ENCODE measurements at regions of chr14 and their contacts with region 1.

Region 1: DNA sequence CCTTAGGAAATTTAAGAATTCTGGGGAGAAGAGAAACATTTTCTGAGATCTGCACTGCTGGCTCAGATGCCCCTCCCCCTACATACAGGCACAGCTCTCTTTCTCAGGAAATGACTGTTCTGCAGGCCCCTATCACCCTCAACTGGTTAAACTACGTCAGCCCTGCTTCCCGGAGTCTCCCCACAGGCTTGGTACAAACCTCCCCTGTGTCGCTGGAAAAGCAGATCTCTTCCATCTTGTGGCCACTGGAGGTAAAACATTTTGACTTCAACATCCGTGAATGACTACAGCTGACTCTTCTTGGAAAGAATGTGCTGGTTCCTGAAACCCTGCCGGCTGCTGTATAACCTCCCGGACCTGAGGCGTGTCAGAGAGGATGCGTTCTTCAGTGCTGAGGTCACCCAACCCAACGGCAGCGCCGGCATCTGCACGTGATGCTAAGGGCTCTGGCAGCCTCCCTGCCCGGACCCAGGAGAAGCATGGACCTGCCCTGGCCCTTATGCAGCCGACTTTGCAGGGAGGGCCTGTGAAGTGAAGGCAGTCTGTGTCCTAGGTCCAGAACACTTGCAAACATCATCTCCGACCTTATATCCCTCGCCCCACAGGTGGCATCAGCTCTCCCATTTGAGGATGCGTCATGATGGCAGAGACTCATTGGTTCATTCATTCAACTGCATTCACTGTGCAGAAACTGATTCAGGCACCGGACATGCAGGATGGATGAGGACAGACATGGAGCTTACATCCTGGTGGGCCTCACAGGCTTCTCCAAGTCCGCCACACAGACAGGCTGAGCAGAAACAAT is 129.3 kb downstream of the GCH1 start:
- DNase-seq: peak; percentile 84
- H3K4me3 Mint-ChIP-seq: peak overlapping the region; percentile 49
- H3K27ac Mint-ChIP-seq: peak overlapping the region; percentile 67
- H3K4me1 Mint-ChIP-seq: peaks cover 37% of the 10 kb centered on the region
- H3K27me3 Mint-ChIP-seq: peaks cover 38% of the 10 kb centered on the region

Region 2: GRCh38 chr14:54396493-54397335 is 376.7 kb before region 1 on chr14 and contains the start of gene CDKN3:
- CTCF ChIA-PET with region 1: interaction called, 24 read pairs
- POLR2A ChIA-PET with region 1: interaction called, 8 read pairs
- DNase-seq: peak; percentile 99
- H3K4me3 Mint-ChIP-seq: peak within 1 kb of the TSS; percentile 87
- H3K27ac Mint-ChIP-seq: peak within 1 kb of the TSS; percentile 78
- H3K4me1 Mint-ChIP-seq: peaks cover 26% of the 10 kb centered on the region
- H3K27me3 Mint-ChIP-seq: no peaks in the 10 kb centered on the region
- total RNA-seq, gene CDKN3: 76.3 to 79.6 TPM

Region 3: GRCh38 chr14:54555651-54556050 is 217.7 kb before region 1 on chr14:
- CTCF ChIA-PET with region 1: interaction called, 238 read pairs
- POLR2A ChIA-PET with region 1: no interaction called
- DNase-seq: no peak
- H3K4me3 Mint-ChIP-seq: no peak overlapping the region
- H3K27ac Mint-ChIP-seq: no peak overlapping the region
- H3K4me1 Mint-ChIP-seq: no peaks in the 10 kb centered on the region
- H3K27me3 Mint-ChIP-seq: peaks cover 14% of the 10 kb centered on the region

Region 4: DNA sequence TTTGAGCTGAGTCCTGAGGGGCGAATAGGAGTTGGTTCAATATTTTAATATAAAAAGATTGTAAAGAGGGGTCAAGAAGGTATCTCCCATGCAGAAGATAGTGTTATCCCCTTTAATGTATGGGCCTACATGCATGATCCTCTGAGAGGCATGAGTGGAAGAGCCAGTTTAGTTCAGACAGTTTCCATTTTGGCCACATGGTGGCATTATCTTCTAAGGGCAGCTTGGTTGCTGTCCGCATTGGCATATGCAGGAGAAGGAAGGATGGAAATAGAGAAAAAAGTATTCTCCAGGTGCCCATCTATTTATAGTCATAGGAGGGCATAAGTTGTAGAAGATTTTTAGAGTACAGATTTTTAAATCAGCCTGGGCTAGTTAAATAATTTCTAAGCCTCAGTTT is 201.1 kb before region 1 on chr14:
- CTCF ChIA-PET with region 1: interaction called, 238 read pairs
- POLR2A ChIA-PET with region 1: interaction called, 60 read pairs
- DNase-seq: no peak
- H3K4me3 Mint-ChIP-seq: no peak overlapping the region
- H3K27ac Mint-ChIP-seq: no peak overlapping the region
- H3K4me1 Mint-ChIP-seq: peaks cover 8% of the 10 kb centered on the region
- H3K27me3 Mint-ChIP-seq: peaks cover 31% of the 10 kb centered on the region

Region 5: GRCh38 chr14:54691525-54692283 is 81.7 kb before region 1 on chr14:
- CTCF ChIA-PET with region 1: interaction called, 21 read pairs
- POLR2A ChIA-PET with region 1: no interaction called
- DNase-seq: peak; percentile 57
- H3K4me3 Mint-ChIP-seq: no peak overlapping the region
- H3K27ac Mint-ChIP-seq: no peak overlapping the region
- H3K4me1 Mint-ChIP-seq: peaks cover 10% of the 10 kb centered on the region
- H3K27me3 Mint-ChIP-seq: peaks cover 38% of the 10 kb centered on the region

Region 6: GRCh38 chr14:54866588-54866987 is 93.2 kb after region 1 on chr14:
- CTCF ChIA-PET with region 1: no interaction called
- POLR2A ChIA-PET with region 1: no interaction called
- DNase-seq: no peak
- H3K4me3 Mint-ChIP-seq: no peak overlapping the region
- H3K27ac Mint-ChIP-seq: no peak overlapping the region
- H3K4me1 Mint-ChIP-seq: peaks cover 19% of the 10 kb centered on the region
- H3K27me3 Mint-ChIP-seq: no peaks in the 10 kb centered on the region